Prostate gland (tissue), 2 donors: ENCODE measurements at regions of chr1 and their contacts with region 1.

Region 1: DNA sequence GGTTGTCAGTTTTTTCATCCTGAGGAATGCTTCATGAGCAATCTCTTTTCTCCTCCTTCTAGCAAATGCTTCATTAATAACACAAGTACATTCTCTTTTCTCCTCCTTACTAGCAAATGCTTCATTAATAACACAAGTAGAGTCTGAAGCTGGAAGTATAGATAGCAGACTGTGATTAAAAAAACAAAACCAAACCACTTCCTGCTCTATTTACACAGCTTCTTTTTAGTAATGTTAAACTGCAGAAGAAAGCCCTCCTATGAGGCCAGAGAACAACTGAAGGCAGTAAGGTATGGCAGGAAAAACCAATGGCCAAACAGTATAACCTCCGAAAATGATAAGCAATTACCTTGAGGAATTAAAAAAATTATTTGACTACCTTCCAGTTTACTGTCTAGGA is 90.1 kb downstream of the ZSWIM5 start:
- DNase-seq: no peak
- H3K4me3 ChIP-seq: no peak overlapping the region
- H3K27ac ChIP-seq: no peak overlapping the region
- H3K4me1 ChIP-seq: no peaks in the 10 kb centered on the region
- H3K27me3 ChIP-seq: no peaks in the 10 kb centered on the region
- CTCF ChIP-seq: no peak
- POLR2A ChIP-seq: no peak

Region 2: DNA sequence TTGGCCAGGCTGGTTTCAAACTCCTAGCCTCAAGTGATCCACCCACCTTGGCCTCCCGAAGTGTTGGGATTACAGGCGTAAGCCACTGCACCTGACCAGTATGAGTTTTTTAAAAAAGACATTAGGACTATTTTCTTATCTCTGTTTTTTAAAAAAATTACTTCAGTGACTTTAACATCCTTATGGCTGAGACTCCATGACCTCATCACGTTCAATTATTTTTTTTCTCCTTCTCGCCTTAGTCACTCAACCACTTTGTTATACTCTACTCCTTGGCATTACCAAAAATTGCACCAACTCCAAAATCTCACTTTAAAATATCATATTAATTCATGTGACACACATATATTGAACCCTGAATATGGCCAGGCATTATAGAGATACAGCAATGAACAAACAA is 165.4 kb before region 1 on chr1:
- intact Hi-C with region 1: loop called (anchors 5 kb)
- DNase-seq: no peak
- H3K4me3 ChIP-seq: no peak overlapping the region
- H3K27ac ChIP-seq: no peak overlapping the region
- H3K4me1 ChIP-seq: peaks cover 6% of the 10 kb centered on the region
- H3K27me3 ChIP-seq: no peaks in the 10 kb centered on the region
- CTCF ChIP-seq: no peak
- POLR2A ChIP-seq: no peak